Mammary epithelial cell (primary cell): ENCODE measurements at regions of chr13 and their contacts with region 1.

Region 1: DNA sequence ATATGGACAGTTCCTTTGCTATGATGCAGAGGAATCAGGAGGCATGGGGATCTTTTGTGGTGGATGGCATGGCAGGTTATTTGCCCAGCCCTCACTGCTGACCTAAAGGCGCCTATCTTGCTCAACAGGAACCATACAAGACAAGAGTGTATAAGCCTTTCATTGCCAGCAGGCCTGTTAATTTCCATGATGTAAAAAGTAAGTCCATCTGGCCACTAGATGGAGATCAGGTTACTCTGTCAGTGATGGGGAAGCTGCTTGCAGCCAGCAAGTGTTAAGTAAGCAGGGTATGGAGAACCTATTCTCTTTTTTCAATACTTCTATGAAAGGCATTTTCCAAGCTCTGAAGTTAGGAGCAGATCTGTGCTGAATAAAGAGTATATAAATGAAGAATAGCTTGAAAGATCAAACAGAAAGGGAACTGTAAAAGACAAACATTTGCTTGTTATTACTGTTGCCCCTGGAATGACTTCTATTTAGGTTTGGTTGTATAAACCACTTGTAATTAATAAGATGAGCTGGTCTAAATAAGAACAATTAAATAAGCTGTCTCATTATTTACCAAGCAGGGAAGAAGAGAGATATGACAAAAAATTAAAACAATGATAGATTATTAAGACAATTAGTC is 210.9 kb downstream of the RGCC start:
- DNase-seq: peak; percentile 82
- H3K4me3 ChIP-seq: no peak overlapping the region
- H3K27ac ChIP-seq: no peak overlapping the region
- H3K4me1 ChIP-seq: no peaks in the 10 kb centered on the region
- H3K27me3 ChIP-seq: no peaks in the 10 kb centered on the region
- CTCF ChIP-seq: peak; percentile 76 to 90

Region 2: DNA sequence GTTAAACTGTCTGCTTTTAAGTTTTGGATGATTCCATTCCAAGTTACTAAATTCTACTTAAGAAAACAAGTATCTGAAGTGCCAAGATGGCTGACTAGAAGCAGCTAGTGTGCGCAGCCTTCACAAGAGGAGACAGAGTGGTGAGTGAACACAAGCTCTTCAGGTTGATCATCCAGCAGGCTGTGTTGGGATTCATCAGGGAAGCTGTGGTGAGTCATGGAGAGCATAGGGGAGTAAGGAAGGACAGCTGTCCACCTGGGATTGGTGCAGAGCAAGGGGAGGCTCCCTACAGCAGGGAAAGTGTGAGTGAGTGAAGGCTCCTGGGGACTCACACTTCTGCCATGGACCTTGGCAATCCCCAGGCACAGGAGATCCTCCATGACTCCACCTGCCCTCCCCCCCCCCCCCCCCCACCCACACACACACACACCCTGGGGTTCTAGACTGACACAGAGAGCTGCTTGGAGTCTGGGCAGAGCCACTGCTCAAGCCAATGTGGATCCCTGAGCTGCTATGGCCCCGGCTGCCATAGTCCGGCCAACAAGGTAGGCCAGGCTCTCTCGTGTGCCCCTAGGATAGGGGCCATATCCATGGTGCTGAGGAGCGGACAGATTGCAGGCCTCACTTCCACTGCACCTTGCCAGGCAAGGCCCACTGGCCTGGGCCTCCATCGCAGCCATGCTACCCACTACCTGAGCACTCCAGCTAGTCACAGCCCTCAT is 855.4 kb before region 1 on chr13:
- CTCF ChIA-PET with region 1: no interaction called
- dilution Hi-C with region 1: no loop called
- in situ Hi-C with region 1: no loop called
- intact Hi-C with region 1: no loop called
- DNase-seq: peak; percentile 64
- H3K4me3 ChIP-seq: no peak overlapping the region
- H3K27ac ChIP-seq: no peak overlapping the region
- H3K4me1 ChIP-seq: no peaks in the 10 kb centered on the region
- H3K27me3 ChIP-seq: no peaks in the 10 kb centered on the region
- CTCF ChIP-seq: no peak

Region 3: GRCh38 chr13:41352935-41353840 is 315.1 kb before region 1 on chr13:
- CTCF ChIA-PET with region 1: no interaction called
- dilution Hi-C with region 1: loop called (anchors 25 kb)
- in situ Hi-C with region 1: no loop called
- intact Hi-C with region 1: no loop called
- DNase-seq: peak; percentile 56
- H3K4me3 ChIP-seq: no peak overlapping the region
- H3K27ac ChIP-seq: peak overlapping the region; percentile 71
- H3K4me1 ChIP-seq: peaks cover 12% of the 10 kb centered on the region
- H3K27me3 ChIP-seq: no peaks in the 10 kb centered on the region
- CTCF ChIP-seq: peak; percentile 70 to 74

Region 4: GRCh38 chr13:41384755-41385503 is 283.3 kb before region 1 on chr13:
- CTCF ChIA-PET with region 1: no interaction called
- dilution Hi-C with region 1: no loop called
- in situ Hi-C with region 1: no loop called
- intact Hi-C with region 1: no loop called
- DNase-seq: no peak
- H3K4me3 ChIP-seq: no peak overlapping the region
- H3K27ac ChIP-seq: no peak overlapping the region
- H3K4me1 ChIP-seq: no peaks in the 10 kb centered on the region
- H3K27me3 ChIP-seq: no peaks in the 10 kb centered on the region
- CTCF ChIP-seq: peak; percentile 35 to 43

Region 5: DNA sequence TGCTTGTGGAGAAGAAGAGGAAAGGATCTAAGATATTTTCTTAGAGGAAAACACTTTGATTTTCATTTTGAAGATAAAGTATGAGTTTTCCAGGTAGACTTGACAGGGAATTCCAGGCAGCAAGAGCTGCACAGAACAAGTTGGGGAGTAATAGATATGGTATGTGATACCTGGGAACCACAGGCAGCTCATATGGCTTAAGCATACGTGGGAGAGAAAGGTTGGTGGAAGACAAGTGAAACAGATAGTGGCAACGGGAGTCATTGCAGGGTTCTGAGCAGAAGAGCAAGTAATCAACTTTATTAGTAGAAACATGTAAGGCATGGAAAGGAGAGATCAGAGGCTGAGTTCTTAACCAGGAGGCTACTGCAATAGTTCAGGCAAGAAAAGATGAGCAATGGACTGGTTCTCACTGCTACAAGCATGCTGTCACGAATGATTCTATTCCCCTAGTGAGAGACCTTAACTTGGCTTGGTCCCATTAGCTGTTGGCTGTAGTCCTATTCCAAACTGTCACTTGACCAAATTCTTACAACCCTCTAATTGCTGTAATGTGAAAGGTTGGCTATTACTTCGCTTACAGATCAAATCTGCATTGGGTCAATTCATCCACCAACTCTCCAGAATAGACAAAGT is 74.8 kb after region 1 on chr13:
- CTCF ChIA-PET with region 1: no interaction called
- dilution Hi-C with region 1: no loop called
- in situ Hi-C with region 1: no loop called
- intact Hi-C with region 1: loop called (anchors 5 kb)
- DNase-seq: peak; percentile 90
- H3K4me3 ChIP-seq: no peak overlapping the region
- H3K27ac ChIP-seq: no peak overlapping the region
- H3K4me1 ChIP-seq: peaks cover 14% of the 10 kb centered on the region
- H3K27me3 ChIP-seq: no peaks in the 10 kb centered on the region
- CTCF ChIP-seq: no peak

Region 6: DNA sequence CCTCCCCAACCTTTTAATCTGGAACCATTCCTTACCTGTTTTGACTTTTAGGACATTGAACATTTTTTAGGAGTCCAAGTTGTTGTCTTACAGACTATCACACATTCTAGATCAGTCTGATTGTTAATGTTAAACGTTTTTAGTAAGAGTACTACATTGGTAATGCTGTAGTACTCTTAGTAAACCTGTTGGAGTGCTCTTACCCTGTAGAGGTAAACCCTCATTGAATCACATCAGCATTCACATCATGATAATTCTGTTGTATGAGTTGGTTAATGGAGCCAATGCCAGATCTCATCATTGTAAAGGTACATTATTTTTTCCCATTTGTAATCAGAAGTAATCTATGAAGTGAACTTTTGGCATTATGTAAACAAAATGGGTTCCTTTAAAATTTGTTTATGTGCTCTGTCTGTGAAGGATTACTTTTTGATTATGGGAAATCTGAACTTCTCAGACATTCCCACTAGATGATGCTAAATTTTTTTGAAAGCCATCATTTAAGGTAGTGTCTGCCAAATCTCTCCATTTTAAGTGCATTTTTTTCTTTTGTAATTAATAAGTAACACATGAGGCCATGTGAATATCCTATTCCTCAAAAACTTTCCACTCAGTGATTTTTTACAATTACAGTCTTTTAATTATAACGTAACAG is 237.5 kb after region 1 on chr13:
- CTCF ChIA-PET with region 1: no interaction called
- dilution Hi-C with region 1: no loop called
- in situ Hi-C with region 1: loop called in 1 of 2 experiments (anchors 25 kb)
- intact Hi-C with region 1: loop called (anchors 5 kb)
- DNase-seq: peak; percentile 45
- H3K4me3 ChIP-seq: no peak overlapping the region
- H3K27ac ChIP-seq: no peak overlapping the region
- H3K4me1 ChIP-seq: peaks cover 10% of the 10 kb centered on the region
- H3K27me3 ChIP-seq: no peaks in the 10 kb centered on the region
- CTCF ChIP-seq: peak; percentile 74 to 79

Region 7: GRCh38 chr13:41960639-41961465 is 292.6 kb after region 1 on chr13 and contains the start of gene VWA8:
- CTCF ChIA-PET with region 1: no interaction called
- dilution Hi-C with region 1: no loop called
- in situ Hi-C with region 1: no loop called
- intact Hi-C with region 1: loop called (anchors 5 kb)
- DNase-seq: peak; percentile 84
- H3K4me3 ChIP-seq: peak within 1 kb of the TSS; percentile 82 to 88 (median 84)
- H3K27ac ChIP-seq: peak within 1 kb of the TSS; percentile 82
- H3K4me1 ChIP-seq: peaks cover 27% of the 10 kb centered on the region
- H3K27me3 ChIP-seq: no peaks in the 10 kb centered on the region
- CTCF ChIP-seq: no peak
- total RNA-seq, gene VWA8: 24.1 to 32.0 TPM

Region 8: GRCh38 chr13:42110410-42111155 is 442.3 kb after region 1 on chr13:
- CTCF ChIA-PET with region 1: no interaction called
- dilution Hi-C with region 1: no loop called
- in situ Hi-C with region 1: loop called (anchors 25 kb)
- intact Hi-C with region 1: loop called (anchors 1 kb)
- DNase-seq: peak; percentile 73
- H3K4me3 ChIP-seq: no peak overlapping the region
- H3K27ac ChIP-seq: no peak overlapping the region
- H3K4me1 ChIP-seq: peaks cover 31% of the 10 kb centered on the region
- H3K27me3 ChIP-seq: no peaks in the 10 kb centered on the region
- CTCF ChIP-seq: peak; percentile 56 to 67